ENCODE measurements at regions of chr1 and their contacts with region 1.

Region 1: GRCh38 chr1:235160957-235161684 is at the start of gene RBM34:
- DNase-seq: peak; percentile 97
- ATAC-seq: peak; percentile 91
- H3K4me3 Mint-ChIP-seq: peak within 1 kb of the TSS; percentile 93
- H3K27ac Mint-ChIP-seq: peak within 1 kb of the TSS; percentile 95
- H3K4me1 Mint-ChIP-seq: peaks cover 15% of the 10 kb centered on the region
- H3K27me3 Mint-ChIP-seq: no peaks in the 10 kb centered on the region
- total RNA-seq, gene RBM34: 126 to 154 TPM

Region 2: DNA sequence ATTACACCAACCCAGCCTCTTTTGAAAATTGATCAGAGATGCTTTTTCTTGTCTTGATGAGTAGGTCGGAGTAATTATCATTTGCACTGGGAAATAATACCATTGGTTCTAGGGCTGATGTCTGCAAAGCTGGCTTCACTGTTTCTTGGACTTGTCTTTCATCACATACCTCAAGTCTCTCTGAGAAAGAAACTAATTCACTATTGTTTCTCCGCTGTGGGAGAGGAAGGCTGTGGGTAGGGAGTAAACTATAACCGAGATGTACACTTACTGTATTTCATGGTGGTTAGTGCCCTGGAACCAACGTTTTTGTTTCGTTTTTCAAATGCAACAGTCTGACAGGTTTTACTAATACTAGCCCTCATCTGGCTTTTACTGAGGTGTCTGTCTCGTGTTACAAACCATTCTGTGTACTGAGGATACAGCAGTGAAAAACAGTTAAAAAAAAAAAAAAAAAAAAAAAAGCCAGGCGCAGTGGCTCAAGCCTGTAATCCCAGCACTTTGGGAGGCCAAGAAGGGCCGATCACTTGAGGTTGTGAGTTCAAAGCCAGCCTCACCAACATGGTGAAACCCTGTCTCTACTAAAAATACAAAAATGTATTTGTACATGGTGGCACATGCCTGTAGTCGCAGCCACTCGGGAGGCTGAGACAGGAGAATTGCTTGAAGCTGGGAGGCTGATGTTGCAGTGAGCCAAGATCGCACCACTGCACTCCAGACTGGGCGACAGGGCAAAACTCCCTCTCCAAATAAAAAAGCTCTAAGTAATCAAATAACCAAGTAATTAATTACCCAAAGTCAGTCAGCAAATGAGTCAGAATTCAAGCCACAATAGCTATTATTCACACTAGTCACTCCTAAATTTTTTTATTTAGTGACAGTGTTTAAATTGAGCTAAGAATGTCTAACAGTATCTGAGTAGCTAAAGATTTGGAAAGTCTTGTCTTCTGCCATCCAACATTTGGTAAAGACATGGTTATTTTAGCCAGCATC is 55.8 kb before region 1 on chr1:
- CTCF ChIA-PET with region 1: interaction called, 4 read pairs
- POLR2A ChIA-PET with region 1: interaction called, 6 read pairs
- intact Hi-C with region 1: loop called in 1 of 2 experiments (anchors 1 kb)
- DNase-seq: peak; percentile 26
- ATAC-seq: peak; percentile 59
- H3K4me3 Mint-ChIP-seq: peak overlapping the region; percentile 60
- H3K27ac Mint-ChIP-seq: peak overlapping the region; percentile 56
- H3K4me1 Mint-ChIP-seq: peaks cover 44% of the 10 kb centered on the region
- H3K27me3 Mint-ChIP-seq: peaks cover 4% of the 10 kb centered on the region

Region 3: GRCh38 chr1:235128456-235129328 is 32.4 kb before region 1 on chr1 and contains the start of gene TOMM20:
- CTCF ChIA-PET with region 1: interaction called, 3 read pairs
- POLR2A ChIA-PET with region 1: interaction called, 4 read pairs
- intact Hi-C with region 1: loop called (anchors 1 kb)
- DNase-seq: peak; percentile 97
- ATAC-seq: peak; percentile 92
- H3K4me3 Mint-ChIP-seq: peak within 1 kb of the TSS; percentile 90
- H3K27ac Mint-ChIP-seq: peak within 1 kb of the TSS; percentile 98
- H3K4me1 Mint-ChIP-seq: peaks cover 41% of the 10 kb centered on the region
- H3K27me3 Mint-ChIP-seq: no peaks in the 10 kb centered on the region
- total RNA-seq, gene TOMM20: 62.1 to 148 TPM

Region 4: DNA sequence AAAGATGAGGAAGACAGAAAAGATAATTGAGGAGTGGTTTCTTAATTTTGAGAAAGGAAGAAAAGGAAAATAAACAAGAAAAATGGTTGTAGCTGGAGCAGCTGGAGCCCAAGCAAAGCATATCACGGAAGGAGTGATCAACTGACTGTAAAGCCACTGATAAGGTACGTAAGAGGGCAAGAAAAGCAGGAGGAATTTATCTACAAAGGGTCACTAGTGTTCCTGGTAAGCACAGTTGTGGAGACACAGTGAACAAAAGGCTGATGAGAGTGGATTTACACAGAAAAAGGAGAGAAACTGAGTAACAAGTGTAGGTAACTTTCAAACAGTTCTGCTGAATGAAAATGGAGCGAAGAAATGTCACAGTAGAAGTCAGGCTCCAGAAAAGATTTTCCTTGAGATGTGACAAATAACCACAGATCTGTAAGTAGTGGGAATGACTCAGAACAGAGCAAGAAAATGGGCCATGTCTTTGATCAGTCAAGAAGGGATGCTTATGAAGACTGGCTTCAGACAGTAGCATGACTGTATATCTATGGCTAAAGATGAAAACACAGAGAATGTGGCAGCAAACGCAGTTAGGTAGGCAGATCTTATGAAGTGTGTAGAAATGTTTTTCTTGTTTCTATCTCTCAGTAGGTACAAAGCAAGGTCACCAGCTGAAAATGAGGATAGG is 45.5 kb after region 1 on chr1:
- CTCF ChIA-PET with region 1: interaction called, 3 read pairs
- POLR2A ChIA-PET with region 1: interaction called, 10 read pairs
- intact Hi-C with region 1: loop called (anchors 5 kb)
- DNase-seq: peak; percentile 25
- ATAC-seq: peak; percentile 98
- H3K4me3 Mint-ChIP-seq: peak overlapping the region; percentile 12
- H3K27ac Mint-ChIP-seq: peak overlapping the region; percentile 92
- H3K4me1 Mint-ChIP-seq: peaks cover 29% of the 10 kb centered on the region
- H3K27me3 Mint-ChIP-seq: no peaks in the 10 kb centered on the region

Region 5: GRCh38 chr1:235367000-235367908 is 206.1 kb after region 1 on chr1 and contains the start of gene TBCE:
- CTCF ChIA-PET with region 1: no interaction called
- POLR2A ChIA-PET with region 1: no interaction called
- intact Hi-C with region 1: loop called in 1 of 2 experiments (anchors 1 kb)
- DNase-seq: peak; percentile 92
- ATAC-seq: peak; percentile 98
- H3K4me3 Mint-ChIP-seq: peak within 1 kb of the TSS; percentile 98
- H3K27ac Mint-ChIP-seq: peak within 1 kb of the TSS; percentile 93
- H3K4me1 Mint-ChIP-seq: peaks cover 22% of the 10 kb centered on the region
- H3K27me3 Mint-ChIP-seq: no peaks in the 10 kb centered on the region
- total RNA-seq, gene TBCE: 22.3 to 26.1 TPM